CD4-positive, alpha-beta T cell (primary cell): ENCODE measurements at regions of chr9 and their contacts with region 1.

Region 1: GRCh38 chr9:35603987-35604577 is 980 bp upstream of the TESK1 start:
- DNase-seq: peak; percentile 98 to 100 (median 99)
- ATAC-seq: peak; percentile 88
- H3K4me3 ChIP-seq: peak overlapping the region; percentile 94
- H3K4me3 Mint-ChIP-seq: peak overlapping the region; percentile 99
- H3K27ac ChIP-seq: peak overlapping the region; percentile 73 to 89
- H3K27ac Mint-ChIP-seq: peak overlapping the region; percentile 96
- H3K4me1 ChIP-seq: peaks cover 43% of the 10 kb centered on the region
- H3K4me1 Mint-ChIP-seq: peaks cover 33% of the 10 kb centered on the region
- H3K27me3 ChIP-seq: no peaks in the 10 kb centered on the region
- H3K27me3 Mint-ChIP-seq: no peaks in the 10 kb centered on the region
- CTCF ChIP-seq: peak; percentile 98

Region 2: GRCh38 chr9:35111001-35111933 is 492.8 kb before region 1 on chr9:
- CTCF ChIA-PET with region 1: no interaction called
- POLR2A ChIA-PET with region 1: no interaction called
- intact Hi-C with region 1: loop called (anchors 5 kb)
- DNase-seq: peak; percentile 92 to 98 (median 96)
- ATAC-seq: peak; percentile 80
- H3K4me3 ChIP-seq: peak overlapping the region; percentile 73
- H3K4me3 Mint-ChIP-seq: peak overlapping the region; percentile 93
- H3K27ac ChIP-seq: peak overlapping the region; percentile 70 to 74
- H3K27ac Mint-ChIP-seq: peak overlapping the region; percentile 84
- H3K4me1 ChIP-seq: peaks cover 54% of the 10 kb centered on the region
- H3K4me1 Mint-ChIP-seq: peaks cover 61% of the 10 kb centered on the region
- H3K27me3 ChIP-seq: no peaks in the 10 kb centered on the region
- H3K27me3 Mint-ChIP-seq: no peaks in the 10 kb centered on the region
- CTCF ChIP-seq: no peak

Region 3: GRCh38 chr9:35526087-35526801 is 77.8 kb before region 1 on chr9:
- CTCF ChIA-PET with region 1: no interaction called
- POLR2A ChIA-PET with region 1: no interaction called
- intact Hi-C with region 1: no loop called
- DNase-seq: no peak
- ATAC-seq: no peak
- H3K4me3 ChIP-seq: no peak overlapping the region
- H3K4me3 Mint-ChIP-seq: no peak overlapping the region
- H3K27ac ChIP-seq: no peak overlapping the region
- H3K27ac Mint-ChIP-seq: no peak overlapping the region
- H3K4me1 ChIP-seq: no peaks in the 10 kb centered on the region
- H3K4me1 Mint-ChIP-seq: peaks cover 4% of the 10 kb centered on the region
- H3K27me3 ChIP-seq: no peaks in the 10 kb centered on the region
- H3K27me3 Mint-ChIP-seq: no peaks in the 10 kb centered on the region
- CTCF ChIP-seq: no peak

Region 4: DNA sequence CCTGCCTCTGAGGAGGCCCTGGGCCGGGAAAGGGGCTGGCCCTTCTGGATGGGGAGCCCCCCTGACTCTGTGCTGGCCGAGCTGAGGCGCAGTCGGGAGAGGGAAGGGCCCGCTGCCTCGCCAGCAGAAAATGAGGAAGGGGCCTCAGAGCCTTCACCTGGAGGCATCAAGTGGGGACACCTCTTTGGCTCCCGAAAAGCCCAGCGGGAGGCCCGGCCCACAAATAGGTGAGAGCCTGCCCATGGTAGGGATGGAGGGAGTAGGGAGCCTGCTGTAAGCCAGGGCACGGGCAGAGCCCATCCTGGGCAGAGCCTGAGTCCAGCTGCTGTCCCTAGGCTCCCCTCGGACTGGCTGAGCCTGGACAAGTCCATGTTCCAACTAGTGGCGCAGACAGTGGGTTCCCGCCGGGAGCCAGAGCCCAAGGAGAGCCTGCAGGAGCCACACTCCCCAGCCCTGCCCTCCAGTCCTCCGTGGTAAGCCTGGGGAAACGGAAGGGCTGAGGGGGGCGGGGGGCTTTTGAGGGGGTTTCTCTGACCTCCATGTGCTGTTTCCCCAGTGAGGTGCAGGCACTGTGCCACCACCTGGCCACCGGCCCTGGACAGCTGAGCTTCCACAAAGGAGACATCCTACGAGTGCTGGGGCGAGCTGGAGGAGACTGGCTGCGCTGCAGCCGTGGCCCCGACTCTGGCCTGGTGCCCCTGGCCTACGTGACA is 43.3 kb before region 1 on chr9:
- CTCF ChIA-PET with region 1: no interaction called
- POLR2A ChIA-PET with region 1: no interaction called
- intact Hi-C with region 1: no loop called
- DNase-seq: no peak
- ATAC-seq: no peak
- H3K4me3 ChIP-seq: no peak overlapping the region
- H3K4me3 Mint-ChIP-seq: no peak overlapping the region
- H3K27ac ChIP-seq: no peak overlapping the region
- H3K27ac Mint-ChIP-seq: no peak overlapping the region
- H3K4me1 ChIP-seq: no peaks in the 10 kb centered on the region
- H3K4me1 Mint-ChIP-seq: no peaks in the 10 kb centered on the region
- H3K27me3 ChIP-seq: no peaks in the 10 kb centered on the region
- H3K27me3 Mint-ChIP-seq: no peaks in the 10 kb centered on the region
- CTCF ChIP-seq: no peak

Region 5: DNA sequence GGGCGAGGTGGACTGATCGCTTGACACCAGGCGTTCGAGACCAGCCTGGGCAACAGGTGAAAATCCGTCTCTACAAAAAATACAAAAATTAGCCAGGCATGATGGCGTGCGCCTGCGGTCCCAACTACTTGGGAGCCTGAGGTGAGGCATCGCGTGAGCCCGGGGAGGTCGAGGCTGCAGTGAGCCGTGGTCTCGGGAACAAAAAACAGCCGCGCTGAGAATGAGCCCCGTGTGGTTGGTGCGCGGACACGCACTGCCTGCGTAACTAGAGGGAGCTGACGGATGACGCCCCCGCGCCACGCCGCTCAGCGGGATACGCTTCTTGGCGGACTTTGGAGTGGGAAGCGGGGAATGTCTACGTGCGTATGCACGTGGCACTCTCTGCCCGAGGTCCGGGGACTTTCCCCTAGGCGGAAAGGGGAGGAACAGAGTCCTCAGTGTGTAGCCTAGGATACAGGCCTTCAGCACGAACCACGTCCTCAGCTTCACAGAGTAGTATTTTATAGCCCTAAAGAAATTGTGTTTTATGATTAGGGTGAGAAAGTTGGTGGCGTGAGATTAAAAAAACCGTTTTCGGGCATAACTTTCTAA is 53.6 kb after region 1 on chr9 and contains the start of gene RMRP:
- CTCF ChIA-PET with region 1: interaction called, 27 read pairs
- POLR2A ChIA-PET with region 1: interaction called, 21 read pairs
- intact Hi-C with region 1: loop called (anchors 1 kb)
- DNase-seq: peak; percentile 63 to 97 (median 77)
- ATAC-seq: peak; percentile 75
- H3K4me3 ChIP-seq: peak within 1 kb of the TSS; percentile 88
- H3K4me3 Mint-ChIP-seq: peak within 1 kb of the TSS; percentile 96
- H3K27ac ChIP-seq: peak within 1 kb of the TSS; percentile 99 to 100
- H3K27ac Mint-ChIP-seq: peak within 1 kb of the TSS; percentile 100
- H3K4me1 ChIP-seq: peaks cover 73% of the 10 kb centered on the region
- H3K4me1 Mint-ChIP-seq: peaks cover 69% of the 10 kb centered on the region
- H3K27me3 ChIP-seq: no peaks in the 10 kb centered on the region
- H3K27me3 Mint-ChIP-seq: peaks cover 8% of the 10 kb centered on the region
- CTCF ChIP-seq: no peak
- total RNA-seq, gene RMRP: 14,857 to 24,615 TPM

Region 6: GRCh38 chr9:35696525-35697215 is 92.6 kb after region 1 on chr9:
- CTCF ChIA-PET with region 1: interaction called, 9 read pairs
- POLR2A ChIA-PET with region 1: interaction called, 7 read pairs
- intact Hi-C with region 1: loop called in 1 of 2 experiments (anchors 2 kb)
- DNase-seq: peak; percentile 29 to 78 (median 46)
- ATAC-seq: peak; percentile 94
- H3K4me3 ChIP-seq: no peak overlapping the region
- H3K4me3 Mint-ChIP-seq: no peak overlapping the region
- H3K27ac ChIP-seq: no peak overlapping the region
- H3K27ac Mint-ChIP-seq: peak overlapping the region; percentile 24
- H3K4me1 ChIP-seq: peaks cover 10% of the 10 kb centered on the region
- H3K4me1 Mint-ChIP-seq: peaks cover 18% of the 10 kb centered on the region
- H3K27me3 ChIP-seq: no peaks in the 10 kb centered on the region
- H3K27me3 Mint-ChIP-seq: no peaks in the 10 kb centered on the region
- CTCF ChIP-seq: peak; percentile 97

Region 7: DNA sequence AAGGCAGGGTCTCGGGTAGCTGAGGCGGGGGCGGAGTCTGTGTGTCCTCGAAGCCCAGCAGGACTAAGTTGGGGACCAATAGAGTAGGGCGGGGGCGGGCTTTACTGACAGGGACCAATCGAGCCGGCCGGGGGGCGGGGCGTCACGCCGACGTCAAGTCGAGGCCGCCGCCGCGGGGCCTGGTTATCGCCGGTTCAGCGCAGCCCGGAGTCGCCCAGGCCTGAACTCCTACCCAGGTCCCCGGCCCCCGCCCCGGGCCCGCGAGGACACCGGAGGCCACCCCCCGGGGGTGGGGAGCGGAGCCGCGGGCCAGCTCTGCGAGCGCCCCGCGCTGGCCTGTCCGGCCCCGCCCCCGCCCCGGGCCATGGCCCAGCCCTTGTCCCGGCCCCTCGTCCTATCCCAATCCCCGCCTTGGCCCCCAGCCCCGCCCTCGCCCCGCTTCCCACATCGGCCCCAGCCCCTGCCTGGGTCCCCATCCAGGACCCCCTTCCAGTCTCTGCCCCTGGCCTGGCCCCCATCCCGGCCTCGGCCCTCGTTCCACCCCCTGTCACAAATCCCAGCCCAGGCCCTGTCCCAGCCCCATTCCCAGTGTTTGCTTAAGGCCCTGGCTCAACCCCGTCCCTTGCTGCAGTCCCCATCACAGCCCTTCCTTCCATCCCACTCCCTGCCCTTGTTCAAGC is 225.1 kb after region 1 on chr9 and contains the start of gene TMEM8B:
- CTCF ChIA-PET with region 1: no interaction called
- POLR2A ChIA-PET with region 1: no interaction called
- intact Hi-C with region 1: loop called in 1 of 2 experiments (anchors 5 kb)
- DNase-seq: peak; percentile 89 to 98 (median 94)
- ATAC-seq: peak; percentile 94
- H3K4me3 ChIP-seq: peak within 1 kb of the TSS; percentile 92
- H3K4me3 Mint-ChIP-seq: peak within 1 kb of the TSS; percentile 97
- H3K27ac ChIP-seq: peak within 1 kb of the TSS; percentile 44 to 47
- H3K27ac Mint-ChIP-seq: peak within 1 kb of the TSS; percentile 83
- H3K4me1 ChIP-seq: peaks cover 35% of the 10 kb centered on the region
- H3K4me1 Mint-ChIP-seq: peaks cover 40% of the 10 kb centered on the region
- H3K27me3 ChIP-seq: no peaks in the 10 kb centered on the region
- H3K27me3 Mint-ChIP-seq: no peaks in the 10 kb centered on the region
- CTCF ChIP-seq: no peak
- total RNA-seq, gene TMEM8B: 8.9 to 9.6 TPM

Region 8: DNA sequence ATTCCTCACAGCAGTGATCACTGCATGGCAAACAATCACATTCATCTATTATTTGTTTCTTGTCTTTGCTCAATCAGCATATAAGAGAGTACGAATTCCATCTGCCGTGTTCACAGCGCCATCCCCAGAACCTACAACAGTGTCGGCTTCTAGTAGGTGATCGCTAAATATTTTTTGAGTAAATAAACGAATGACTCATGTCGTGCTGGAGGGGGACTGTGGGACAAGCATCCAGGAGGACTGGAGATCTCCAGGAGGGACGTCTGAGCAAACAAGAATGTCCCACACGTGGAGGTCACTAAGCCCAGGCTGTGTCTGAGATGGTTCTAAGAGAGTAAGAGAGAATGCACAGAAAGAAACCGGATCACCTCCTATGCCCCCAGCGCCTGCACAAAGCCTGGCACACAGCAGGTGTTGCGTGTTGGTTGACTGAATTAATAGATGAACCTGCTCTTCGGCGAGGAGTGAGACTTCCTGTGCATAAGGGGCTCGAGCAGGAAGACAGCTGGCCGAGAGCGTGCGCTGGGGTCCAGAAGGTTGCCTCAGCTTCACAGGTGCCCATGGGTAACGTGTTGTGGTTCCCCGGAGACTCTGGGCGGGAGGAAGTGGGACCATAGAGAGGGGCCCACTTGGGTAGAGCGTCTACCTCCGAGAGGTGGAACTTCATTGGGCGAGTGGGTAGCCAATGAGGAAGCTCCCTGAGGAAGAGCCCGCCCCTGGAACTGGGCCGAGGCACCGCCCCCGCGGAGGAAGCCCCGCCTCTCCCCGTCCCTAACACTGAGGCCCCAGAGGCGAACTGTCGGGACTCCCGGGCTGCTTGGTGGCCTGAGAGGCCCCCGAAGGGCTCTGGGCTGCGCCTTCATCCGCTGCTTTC is 1161.6 kb after region 1 on chr9:
- CTCF ChIA-PET with region 1: no interaction called
- POLR2A ChIA-PET with region 1: no interaction called
- intact Hi-C with region 1: loop called in 1 of 2 experiments (anchors 10 kb)
- DNase-seq: peak; percentile 77 to 95 (median 90)
- ATAC-seq: peak; percentile 99
- H3K4me3 ChIP-seq: peak overlapping the region; percentile 63
- H3K4me3 Mint-ChIP-seq: no peak overlapping the region
- H3K27ac ChIP-seq: peak overlapping the region in 1 of 2 donors; percentile 40
- H3K27ac Mint-ChIP-seq: no peak overlapping the region
- H3K4me1 ChIP-seq: peaks cover 17% of the 10 kb centered on the region
- H3K4me1 Mint-ChIP-seq: no peaks in the 10 kb centered on the region
- H3K27me3 ChIP-seq: peaks cover 2 to 3% of the 10 kb centered on the region in 2 experiments
- H3K27me3 Mint-ChIP-seq: peaks cover 16% of the 10 kb centered on the region
- CTCF ChIP-seq: no peak